Mammary epithelial cell (primary cell): ENCODE measurements at regions of chr17 and their contacts with region 1.

Region 1: GRCh38 chr17:72120642-72121163 is at the start of gene SOX9:
- DNase-seq: peak; percentile 98
- H3K4me3 ChIP-seq: peak within 1 kb of the TSS; percentile 67 to 98 (median 96)
- H3K27ac ChIP-seq: peak within 1 kb of the TSS; percentile 88
- H3K4me1 ChIP-seq: peaks cover 55% of the 10 kb centered on the region
- H3K27me3 ChIP-seq: no peaks in the 10 kb centered on the region
- CTCF ChIP-seq: no peak
- total RNA-seq, gene SOX9: 77.4 to 81.9 TPM

Region 2: DNA sequence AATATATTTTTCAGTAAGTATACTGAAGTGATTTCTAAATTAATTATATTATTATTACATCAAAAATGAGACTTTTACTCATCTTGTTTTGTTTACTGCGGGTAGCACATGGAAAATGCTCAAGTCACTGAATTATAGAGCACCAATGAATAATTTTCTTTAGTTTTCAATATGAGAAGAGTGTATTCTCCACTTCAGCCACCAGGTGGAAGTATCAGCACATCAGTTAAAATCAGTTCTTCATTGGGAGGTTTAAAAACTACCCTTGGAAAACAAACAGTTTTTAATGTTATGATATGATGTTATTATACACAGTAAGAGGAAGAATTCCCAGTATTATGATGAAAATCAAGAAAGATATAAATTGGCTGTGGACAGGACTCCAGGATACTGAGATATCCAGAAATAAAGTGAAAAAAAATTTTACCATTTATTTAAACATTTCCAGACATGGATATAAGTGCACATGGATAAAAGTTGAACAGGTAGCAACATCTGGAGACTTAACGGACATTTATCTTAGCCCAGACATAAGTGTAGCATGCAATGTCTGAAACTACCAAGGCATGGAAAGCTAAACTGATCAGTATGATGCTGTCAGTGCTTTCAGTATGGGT is 1484.1 kb before region 1 on chr17:
- CTCF ChIA-PET with region 1: no interaction called
- dilution Hi-C with region 1: no loop called
- in situ Hi-C with region 1: no loop called
- intact Hi-C with region 1: loop called (anchors 2 kb)
- DNase-seq: peak; percentile 30
- H3K4me3 ChIP-seq: no peak overlapping the region
- H3K27ac ChIP-seq: no peak overlapping the region
- H3K4me1 ChIP-seq: no peaks in the 10 kb centered on the region
- H3K27me3 ChIP-seq: peaks cover 3% of the 10 kb centered on the region
- CTCF ChIP-seq: peak; percentile 60 to 67

Region 3: GRCh38 chr17:71423871-71424546 is 696.7 kb before region 1 on chr17:
- CTCF ChIA-PET with region 1: no interaction called
- dilution Hi-C with region 1: no loop called
- in situ Hi-C with region 1: no loop called
- intact Hi-C with region 1: loop called (anchors 1 kb)
- DNase-seq: peak; percentile 99
- H3K4me3 ChIP-seq: no peak overlapping the region
- H3K27ac ChIP-seq: peak overlapping the region; percentile 96
- H3K4me1 ChIP-seq: peaks cover 31% of the 10 kb centered on the region
- H3K27me3 ChIP-seq: no peaks in the 10 kb centered on the region
- CTCF ChIP-seq: peak in 1 of 2 donors; percentile 38

Region 4: GRCh38 chr17:71764505-71764904 is 356.2 kb before region 1 on chr17:
- CTCF ChIA-PET with region 1: interaction called, 5 read pairs
- dilution Hi-C with region 1: no loop called
- in situ Hi-C with region 1: no loop called
- intact Hi-C with region 1: loop called (anchors 5 kb)
- DNase-seq: no peak
- H3K4me3 ChIP-seq: no peak overlapping the region
- H3K27ac ChIP-seq: no peak overlapping the region
- H3K4me1 ChIP-seq: no peaks in the 10 kb centered on the region
- H3K27me3 ChIP-seq: no peaks in the 10 kb centered on the region
- CTCF ChIP-seq: peak; percentile 24 to 44

Region 5: GRCh38 chr17:71959154-71959553 is 161.5 kb before region 1 on chr17:
- CTCF ChIA-PET with region 1: no interaction called
- dilution Hi-C with region 1: no loop called
- in situ Hi-C with region 1: no loop called
- intact Hi-C with region 1: loop called (anchors 1 kb)
- DNase-seq: no peak
- H3K4me3 ChIP-seq: no peak overlapping the region
- H3K27ac ChIP-seq: no peak overlapping the region
- H3K4me1 ChIP-seq: no peaks in the 10 kb centered on the region
- H3K27me3 ChIP-seq: no peaks in the 10 kb centered on the region
- CTCF ChIP-seq: peak; percentile 52 to 71

Region 6: DNA sequence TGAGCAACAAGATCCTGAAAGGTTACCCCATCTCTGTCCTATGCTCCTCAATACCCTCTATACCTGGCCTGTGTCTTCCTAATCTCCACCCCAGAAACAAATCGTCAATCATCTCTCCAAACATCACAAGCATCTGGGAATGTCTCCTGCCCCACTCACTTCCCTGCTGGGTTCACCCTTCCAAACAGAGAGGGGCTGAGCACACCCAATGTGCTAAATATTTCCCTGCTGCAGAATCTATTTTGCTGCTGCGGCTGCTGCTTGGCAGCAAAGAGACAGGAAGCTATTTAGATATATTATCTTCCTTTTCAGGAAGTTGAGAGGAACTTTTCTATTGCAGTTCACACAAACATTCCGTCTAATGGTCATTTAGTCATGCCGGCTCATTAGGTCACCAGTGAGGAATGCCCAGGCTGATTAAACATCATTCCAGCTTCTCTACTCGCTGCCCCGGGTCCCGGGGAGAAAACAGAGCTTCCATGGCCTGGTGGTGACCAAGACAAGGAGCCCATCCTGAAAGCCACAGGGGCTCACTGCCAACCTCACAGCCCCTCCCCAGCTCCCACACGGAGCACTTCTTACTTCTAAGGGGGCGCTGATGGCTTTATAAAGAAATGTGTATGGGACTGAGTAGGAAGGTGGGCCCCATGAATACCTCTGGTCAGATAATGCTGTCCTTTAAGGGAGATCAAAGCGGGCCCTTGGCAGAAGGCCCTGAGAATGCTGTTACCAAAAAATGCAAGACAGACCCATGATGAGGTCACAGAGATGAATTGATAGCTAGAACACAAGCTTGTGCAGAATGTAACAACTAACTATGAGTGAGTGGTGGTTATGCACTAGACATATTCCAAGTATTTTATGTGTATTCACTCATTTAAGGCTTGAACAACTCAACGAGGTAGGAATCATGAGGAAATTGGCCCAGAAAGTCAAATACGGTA is 218.4 kb after region 1 on chr17:
- CTCF ChIA-PET with region 1: no interaction called
- dilution Hi-C with region 1: no loop called
- in situ Hi-C with region 1: no loop called
- intact Hi-C with region 1: loop called (anchors 2 kb)
- DNase-seq: peak; percentile 78
- H3K4me3 ChIP-seq: no peak overlapping the region
- H3K27ac ChIP-seq: peak overlapping the region; percentile 58
- H3K4me1 ChIP-seq: peaks cover 25% of the 10 kb centered on the region
- H3K27me3 ChIP-seq: no peaks in the 10 kb centered on the region
- CTCF ChIP-seq: no peak